Activated CD4-positive, alpha-beta T cell treated with anti-CD3 and anti-CD28 coated beads, Interleukin-2, amount 10 ng/mL, durations not matched to agents 24 days and 14 days (primary cell): ENCODE measurements at regions of chr3 and their contacts with region 1.

Region 1: DNA sequence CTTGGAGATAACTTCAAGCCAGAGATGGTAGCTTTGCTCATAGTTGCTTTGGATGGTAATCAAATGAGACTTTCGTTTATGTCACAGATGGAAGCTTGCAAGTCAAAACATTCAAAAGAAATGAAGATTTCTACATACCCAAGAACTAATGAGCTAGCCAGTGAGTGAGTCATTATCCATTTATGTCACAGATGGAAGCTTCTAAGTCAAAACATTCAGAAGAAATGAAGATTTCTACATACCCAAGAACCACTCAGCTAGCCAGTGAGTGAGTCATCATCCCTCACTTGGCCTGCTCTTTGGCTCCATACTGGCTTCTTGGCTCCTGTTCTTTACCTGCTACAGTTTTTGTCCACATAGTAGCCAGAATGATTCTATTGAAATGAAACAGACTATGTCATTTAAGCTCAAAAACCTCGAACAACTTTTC is 559.8 kb upstream of the CBLB start:
- DNase-seq: no peak
- H3K4me3 Mint-ChIP-seq: peak overlapping the region; percentile 25
- H3K27ac Mint-ChIP-seq: peak overlapping the region; percentile 96
- H3K4me1 Mint-ChIP-seq: peaks cover 42% of the 10 kb centered on the region
- H3K27me3 Mint-ChIP-seq: no peaks in the 10 kb centered on the region

Region 2: GRCh38 chr3:105414841-105415240 is 1013.7 kb before region 1 on chr3:
- intact Hi-C with region 1: no loop called
- DNase-seq: no peak
- H3K4me3 Mint-ChIP-seq: no peak overlapping the region
- H3K27ac Mint-ChIP-seq: no peak overlapping the region
- H3K4me1 Mint-ChIP-seq: no peaks in the 10 kb centered on the region
- H3K27me3 Mint-ChIP-seq: no peaks in the 10 kb centered on the region

Region 3: DNA sequence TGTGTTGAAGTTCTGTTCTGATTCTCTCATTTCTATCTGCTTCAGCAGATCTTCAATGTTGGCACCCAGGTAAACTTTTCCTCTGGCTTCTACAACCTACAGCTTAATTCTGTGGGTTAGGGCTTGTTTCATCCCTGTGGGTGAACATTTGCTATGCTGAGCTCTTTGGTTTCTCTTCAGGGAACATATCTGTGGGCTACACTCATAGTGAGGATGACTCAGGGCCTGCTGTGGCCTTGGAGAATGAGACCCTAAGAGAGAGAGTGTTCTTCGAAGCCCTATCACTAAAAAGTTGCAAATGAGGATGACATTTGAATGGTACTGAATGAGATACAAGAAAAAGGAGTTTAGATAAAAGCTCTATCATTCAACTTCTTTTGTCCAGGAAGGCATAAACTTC is 213.5 kb before region 1 on chr3:
- intact Hi-C with region 1: loop called (anchors 5 kb)
- DNase-seq: peak; percentile 64
- H3K4me3 Mint-ChIP-seq: peak overlapping the region; percentile 3
- H3K27ac Mint-ChIP-seq: peak overlapping the region; percentile 70
- H3K4me1 Mint-ChIP-seq: peaks cover 32% of the 10 kb centered on the region
- H3K27me3 Mint-ChIP-seq: no peaks in the 10 kb centered on the region

Region 4: GRCh38 chr3:106457286-106458180 is 29.0 kb after region 1 on chr3:
- intact Hi-C with region 1: loop called (anchors 2 kb)
- DNase-seq: peak; percentile 70
- H3K4me3 Mint-ChIP-seq: no peak overlapping the region
- H3K27ac Mint-ChIP-seq: peak overlapping the region; percentile 21
- H3K4me1 Mint-ChIP-seq: peaks cover 12% of the 10 kb centered on the region
- H3K27me3 Mint-ChIP-seq: no peaks in the 10 kb centered on the region

Region 5: DNA sequence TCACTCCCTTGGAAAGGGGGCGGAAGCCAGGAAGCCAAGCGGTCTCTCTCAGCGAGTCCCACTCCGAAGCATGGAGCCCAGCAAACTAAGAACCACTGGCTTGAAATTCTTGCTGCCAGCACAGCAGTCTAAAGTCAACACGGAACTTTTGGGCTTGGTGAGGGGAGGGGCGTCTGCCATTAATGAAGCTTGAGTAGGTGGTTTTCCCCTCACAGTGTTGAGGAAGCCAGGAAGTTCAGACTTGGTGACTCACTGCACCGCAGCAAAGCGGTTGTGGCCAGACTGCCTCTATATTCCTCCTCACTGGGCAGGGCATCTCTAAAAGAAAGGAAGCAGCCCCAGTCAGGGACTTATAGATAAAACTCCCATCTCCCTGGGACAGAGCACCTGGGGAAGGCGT is 105.6 kb after region 1 on chr3:
- intact Hi-C with region 1: loop called (anchors 1 kb)
- DNase-seq: peak; percentile 81
- H3K4me3 Mint-ChIP-seq: no peak overlapping the region
- H3K27ac Mint-ChIP-seq: peak overlapping the region; percentile 81
- H3K4me1 Mint-ChIP-seq: peaks cover 17% of the 10 kb centered on the region
- H3K27me3 Mint-ChIP-seq: no peaks in the 10 kb centered on the region

Region 6: DNA sequence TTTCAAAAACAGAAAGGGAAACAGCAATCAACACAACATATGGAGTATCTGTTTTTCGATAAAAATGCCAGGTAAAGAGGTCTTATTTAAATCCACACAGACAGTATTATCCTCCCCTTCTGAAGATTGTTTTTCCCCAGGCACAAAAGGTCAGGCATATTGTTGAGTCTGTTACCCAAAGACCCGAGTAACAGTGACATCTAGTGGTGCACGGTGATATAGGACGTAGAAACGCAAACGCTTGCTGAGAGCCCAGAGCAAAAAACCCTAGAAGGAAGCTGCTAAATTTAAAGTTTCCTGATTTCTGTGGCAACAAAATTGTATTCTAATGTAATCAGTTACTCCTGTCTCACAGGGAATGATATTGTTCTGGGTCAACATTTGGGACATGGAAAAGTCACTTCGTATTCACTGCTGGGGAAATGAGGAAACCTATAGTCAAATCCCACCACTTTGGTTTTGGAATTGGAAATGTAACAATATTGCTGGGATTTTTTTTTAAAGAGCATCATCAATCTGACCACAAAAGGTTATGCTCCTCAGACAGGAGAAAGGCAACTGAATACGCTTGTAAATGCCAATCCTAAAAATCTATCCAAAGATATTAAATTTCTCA is 636.0 kb after region 1 on chr3:
- intact Hi-C with region 1: loop called (anchors 10 kb)
- DNase-seq: peak; percentile 89
- H3K4me3 Mint-ChIP-seq: no peak overlapping the region
- H3K27ac Mint-ChIP-seq: no peak overlapping the region
- H3K4me1 Mint-ChIP-seq: peaks cover 17% of the 10 kb centered on the region
- H3K27me3 Mint-ChIP-seq: peaks cover 8% of the 10 kb centered on the region